Heart left ventricle (tissue), 16 donors: ENCODE measurements at regions of chr17 and their contacts with region 1.

Region 1: GRCh38 chr17:20266806-20267458 is 200.4 kb downstream of the LGALS9B start:
- DNase-seq: no peak
- ATAC-seq: peak in 1 of 4 donors; percentile 47
- H3K4me3 ChIP-seq: no peak overlapping the region
- H3K27ac ChIP-seq: no peak overlapping the region
- H3K4me1 ChIP-seq: peaks cover 0 to 18% (median 6%) of the 10 kb centered on the region in 12 donors
- H3K27me3 ChIP-seq: no peaks in the 10 kb centered on the region
- CTCF ChIP-seq: no peak
- POLR2A ChIP-seq: no peak

Region 2: DNA sequence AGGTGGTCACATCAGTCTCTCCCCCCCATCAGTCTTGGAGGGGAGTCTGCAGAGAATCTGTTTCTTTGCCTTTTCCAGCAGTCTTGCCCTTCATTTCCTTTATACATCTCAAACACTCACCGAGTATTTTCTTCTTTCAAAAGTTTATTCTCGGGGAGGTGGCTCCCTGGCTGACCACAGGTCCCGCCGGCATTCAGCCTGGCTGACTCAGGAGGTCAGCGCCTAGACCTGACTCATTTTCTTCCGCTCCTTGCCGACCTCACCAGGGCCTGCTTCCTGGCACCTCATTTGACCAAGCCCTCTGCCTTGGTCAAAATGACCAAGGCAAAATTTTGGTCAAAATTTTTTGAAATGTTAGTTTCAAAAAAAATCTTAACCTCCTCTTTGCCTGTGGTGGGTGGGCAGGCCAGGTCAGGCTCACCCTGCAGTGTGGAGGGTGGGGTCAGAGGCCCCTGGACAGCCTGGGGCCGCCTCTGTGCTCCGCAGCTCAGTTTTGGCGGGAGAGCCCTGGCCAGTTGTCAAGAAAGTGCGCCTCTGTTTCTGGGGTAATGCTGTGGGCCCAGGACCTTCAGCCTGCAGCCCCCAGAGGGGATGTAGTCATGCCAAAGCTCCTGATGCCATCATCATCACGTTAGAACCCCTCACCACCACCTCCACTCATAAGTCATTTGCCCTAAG is 92.2 kb before region 1 on chr17:
- intact Hi-C with region 1: no loop called
- DNase-seq: no peak
- ATAC-seq: no peak
- H3K4me3 ChIP-seq: no peak overlapping the region
- H3K27ac ChIP-seq: no peak overlapping the region
- H3K4me1 ChIP-seq: peaks cover 0 to 10% (median 0%) of the 10 kb centered on the region in 12 donors
- H3K27me3 ChIP-seq: no peaks in the 10 kb centered on the region
- CTCF ChIP-seq: no peak
- POLR2A ChIP-seq: no peak

Region 3: GRCh38 chr17:20206068-20206467 is 60.9 kb before region 1 on chr17:
- intact Hi-C with region 1: loop called in 1 of 10 experiments (anchors 10 kb)
- DNase-seq: no peak
- ATAC-seq: no peak
- H3K4me3 ChIP-seq: no peak overlapping the region
- H3K27ac ChIP-seq: peak overlapping the region in 1 of 12 donors; percentile 15
- H3K4me1 ChIP-seq: peaks cover 0 to 24% (median 0%) of the 10 kb centered on the region in 12 donors
- H3K27me3 ChIP-seq: no peaks in the 10 kb centered on the region
- CTCF ChIP-seq: no peak
- POLR2A ChIP-seq: no peak

Region 4: GRCh38 chr17:20244671-20245070 is 22.3 kb before region 1 on chr17:
- intact Hi-C with region 1: no loop called
- DNase-seq: no peak
- ATAC-seq: no peak
- H3K4me3 ChIP-seq: no peak overlapping the region
- H3K27ac ChIP-seq: no peak overlapping the region
- H3K4me1 ChIP-seq: no peaks in the 10 kb centered on the region
- H3K27me3 ChIP-seq: no peaks in the 10 kb centered on the region
- CTCF ChIP-seq: no peak
- POLR2A ChIP-seq: no peak